ENCODE measurements at regions of chr10 and their contacts with region 1.

Region 1: GRCh38 chr10:70880077-70880534 is 8.3 kb downstream of the PCBD1 start:
- DNase-seq: peak in 1 of 2 donors; percentile 81
- ATAC-seq: peak; percentile 85
- H3K4me3 ChIP-seq: no peak overlapping the region
- H3K27ac ChIP-seq: no peak overlapping the region
- H3K4me1 ChIP-seq: no peaks in the 10 kb centered on the region
- H3K27me3 ChIP-seq: no peaks in the 10 kb centered on the region

Region 2: GRCh38 chr10:70549962-70550458 is 330.1 kb before region 1 on chr10:
- intact Hi-C with region 1: loop called (anchors 5 kb)
- DNase-seq: peak in 1 of 2 donors; percentile 74
- ATAC-seq: peak; percentile 78
- H3K4me3 ChIP-seq: no peak overlapping the region
- H3K27ac ChIP-seq: no peak overlapping the region
- H3K4me1 ChIP-seq: no peaks in the 10 kb centered on the region
- H3K27me3 ChIP-seq: no peaks in the 10 kb centered on the region

Region 3: DNA sequence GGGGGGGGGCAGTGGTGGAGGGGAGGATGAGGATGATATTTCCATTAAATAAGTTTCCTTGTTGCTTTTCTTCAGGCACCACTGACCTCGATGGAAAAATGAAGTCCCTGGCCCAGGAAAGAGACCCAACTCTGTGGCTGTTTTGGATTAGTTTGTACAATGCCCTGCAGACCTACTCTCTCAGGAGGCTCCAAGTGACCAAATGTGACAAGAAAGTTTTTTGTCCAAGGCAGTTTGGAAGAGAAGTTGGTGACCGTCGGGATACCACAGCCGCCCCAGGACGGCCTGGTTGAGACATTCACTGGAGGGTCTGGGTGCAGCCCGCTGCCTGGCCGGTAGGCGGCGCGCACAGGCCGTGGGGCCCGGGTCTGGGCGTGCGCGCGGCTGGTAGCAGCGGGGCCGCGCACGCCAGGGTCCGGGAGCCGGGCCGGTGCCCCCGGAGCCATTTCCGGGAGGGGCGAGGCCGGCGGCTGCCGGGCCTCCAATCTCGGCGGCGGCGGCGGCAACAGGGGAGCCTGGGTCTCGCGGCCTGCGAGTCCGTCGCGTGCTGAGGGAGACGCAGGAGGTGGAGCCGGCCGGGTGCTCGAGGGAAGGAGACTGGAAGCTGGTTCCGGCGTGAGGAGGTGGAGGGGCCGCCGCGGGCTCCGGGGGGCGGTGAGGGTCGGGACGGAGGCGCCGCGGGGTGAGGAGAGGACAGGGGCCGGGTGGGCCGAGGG is 64.4 kb before region 1 on chr10 and contains the start of gene SGPL1:
- intact Hi-C with region 1: loop called (anchors 1 to 2 kb)
- DNase-seq: peak; percentile 88 to 95
- ATAC-seq: peak; percentile 96
- H3K4me3 ChIP-seq: peak within 1 kb of the TSS; percentile 73 to 82
- H3K27ac ChIP-seq: peak within 1 kb of the TSS in 1 of 2 donors; percentile 84
- H3K4me1 ChIP-seq: no peaks in the 10 kb centered on the region
- H3K27me3 ChIP-seq: no peaks in the 10 kb centered on the region
- total RNA-seq, gene SGPL1: 31.8 to 45.0 TPM